ENCODE measurements at regions of chr13 and their contacts with region 1.

Region 1: GRCh38 chr13:20828539-20829364 is 55.0 kb upstream of the EEF1AKMT1 start:
- DNase-seq: peak; percentile 71
- H3K4me3 ChIP-seq: peak overlapping the region in 1 of 3 experiments; percentile 48
- H3K27ac ChIP-seq: peak overlapping the region; percentile 44
- H3K4me1 ChIP-seq: peaks cover 3% of the 10 kb centered on the region
- H3K27me3 ChIP-seq: no peaks in the 10 kb centered on the region
- CTCF ChIP-seq: peak; percentile 52 to 57
- POLR2A ChIP-seq: no peak

Region 2: GRCh38 chr13:20544201-20544923 is 284.4 kb before region 1 on chr13:
- CTCF ChIA-PET with region 1: no interaction called
- POLR2A ChIA-PET with region 1: no interaction called
- dilution Hi-C with region 1: no loop called
- intact Hi-C with region 1: no loop called
- DNase-seq: no peak
- H3K4me3 ChIP-seq: no peak overlapping the region
- H3K27ac ChIP-seq: no peak overlapping the region
- H3K4me1 ChIP-seq: no peaks in the 10 kb centered on the region
- H3K27me3 ChIP-seq: no peaks in the 10 kb centered on the region
- CTCF ChIP-seq: no peak
- POLR2A ChIP-seq: no peak

Region 3: DNA sequence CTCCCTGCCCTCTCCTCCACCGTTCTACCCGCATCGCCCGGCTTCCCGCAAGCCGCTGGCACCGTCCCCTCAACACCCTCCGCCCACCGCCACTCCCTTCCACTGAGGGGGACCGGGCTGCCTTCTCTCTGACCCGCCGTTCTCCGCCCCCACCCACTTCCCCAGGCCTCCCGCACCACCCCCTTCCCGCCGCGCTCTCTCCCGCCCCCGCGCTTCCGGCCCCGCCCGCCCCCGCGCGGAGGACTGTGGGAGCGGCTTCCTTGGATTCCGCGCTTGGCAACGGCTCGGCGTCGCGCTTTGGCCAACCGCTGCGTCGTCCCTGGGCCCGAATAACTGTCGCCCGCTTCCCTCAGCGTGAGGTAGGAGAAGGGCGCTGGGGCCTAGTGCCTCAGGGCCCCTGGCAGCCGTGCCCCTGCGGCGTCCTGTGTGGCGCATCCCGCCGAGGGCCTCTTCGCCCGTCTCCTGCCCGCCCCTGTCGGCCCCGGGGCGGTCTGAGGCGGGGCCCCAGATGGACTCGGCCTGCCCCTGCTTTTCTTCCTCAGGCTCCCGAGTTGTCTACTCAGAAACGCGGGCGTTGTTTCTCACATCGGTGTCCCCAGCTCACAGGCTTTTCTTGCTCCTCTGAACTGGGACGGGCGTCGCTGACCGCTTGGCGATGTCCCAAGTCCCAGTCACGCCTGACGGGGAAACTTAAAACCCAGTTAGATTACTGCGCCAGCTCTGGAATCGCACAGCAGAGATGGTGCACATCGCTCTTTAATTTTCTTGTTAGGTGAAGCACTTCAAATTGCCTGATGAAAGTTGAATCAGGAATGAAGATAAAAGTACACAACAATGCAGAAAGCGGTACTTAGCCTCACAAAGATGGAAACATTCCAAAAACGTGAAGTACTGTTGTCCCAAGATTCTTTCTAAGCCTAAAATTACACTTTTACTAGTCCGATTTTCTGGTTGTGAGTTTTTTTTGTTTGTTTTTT is 261.6 kb before region 1 on chr13 and contains the start of gene IFT88:
- CTCF ChIA-PET with region 1: interaction called, 4 read pairs
- POLR2A ChIA-PET with region 1: no interaction called
- dilution Hi-C with region 1: no loop called
- intact Hi-C with region 1: loop called (anchors 5 kb)
- DNase-seq: peak; percentile 90
- H3K4me3 ChIP-seq: peak within 1 kb of the TSS; percentile 22 to 89 (median 70)
- H3K27ac ChIP-seq: peak within 1 kb of the TSS; percentile 85
- H3K4me1 ChIP-seq: peaks cover 8% of the 10 kb centered on the region
- H3K27me3 ChIP-seq: no peaks in the 10 kb centered on the region
- CTCF ChIP-seq: no peak
- POLR2A ChIP-seq: peak; percentile 57
- total RNA-seq, gene IFT88: 9.1 and 13.7 TPM in 2 replicates

Region 4: GRCh38 chr13:20713751-20714150 is 115.0 kb before region 1 on chr13:
- CTCF ChIA-PET with region 1: interaction called, 92 read pairs
- POLR2A ChIA-PET with region 1: interaction called, 3 read pairs
- dilution Hi-C with region 1: no loop called
- intact Hi-C with region 1: loop called (anchors 1 kb)
- DNase-seq: peak; percentile 38
- H3K4me3 ChIP-seq: no peak overlapping the region
- H3K27ac ChIP-seq: peak overlapping the region; percentile 56
- H3K4me1 ChIP-seq: peaks cover 38% of the 10 kb centered on the region
- H3K27me3 ChIP-seq: no peaks in the 10 kb centered on the region
- CTCF ChIP-seq: no peak
- POLR2A ChIP-seq: no peak

Region 5: DNA sequence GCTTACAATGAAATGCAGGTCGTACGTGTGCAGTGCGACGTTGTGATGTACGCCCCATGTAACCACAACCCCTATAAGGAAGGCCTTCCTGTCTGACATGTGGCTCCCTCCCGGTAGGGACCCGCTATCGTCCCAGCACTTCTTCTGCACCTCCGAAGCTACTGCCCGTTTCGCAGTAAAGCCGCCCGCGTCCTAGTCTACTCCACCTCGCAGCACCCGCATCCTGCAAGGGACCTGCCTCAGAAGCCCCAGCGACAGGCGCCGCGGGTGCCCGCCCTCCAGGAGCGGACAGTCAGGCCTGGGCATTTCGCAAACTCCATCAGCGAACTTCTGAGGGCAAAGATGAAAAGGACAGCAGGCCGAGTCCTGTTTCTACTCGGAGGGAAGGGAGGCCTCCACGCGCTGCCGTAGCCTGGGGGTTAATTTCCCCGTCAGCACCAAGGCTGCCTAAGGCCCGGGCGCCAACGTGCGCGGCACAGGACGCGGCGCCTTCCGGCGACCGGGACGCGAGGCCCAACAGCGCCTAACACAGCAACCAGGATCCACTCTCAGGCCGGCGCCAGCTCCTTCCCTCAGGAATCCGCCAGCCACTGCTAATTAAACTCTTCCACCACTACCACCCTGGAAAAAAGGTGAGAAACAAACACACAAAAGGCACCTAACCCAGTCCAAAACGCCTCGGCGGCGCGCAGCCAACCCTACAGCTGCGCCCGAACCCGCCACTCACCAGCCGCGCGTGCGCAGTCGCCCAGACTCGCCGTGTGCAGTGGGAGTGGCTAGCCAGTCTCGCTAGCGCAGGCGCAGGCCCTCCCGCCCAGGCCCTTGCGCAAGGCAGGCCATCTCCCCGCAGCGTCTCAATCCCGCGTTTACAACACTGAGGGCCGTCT is 55.3 kb before region 1 on chr13 and contains the start of gene EEF1AKMT1:
- CTCF ChIA-PET with region 1: interaction called, 21 read pairs
- POLR2A ChIA-PET with region 1: no interaction called
- dilution Hi-C with region 1: no loop called
- intact Hi-C with region 1: loop called (anchors 5 kb)
- DNase-seq: peak; percentile 91
- H3K4me3 ChIP-seq: peak within 1 kb of the TSS; percentile 13 to 60 (median 35)
- H3K27ac ChIP-seq: peak within 1 kb of the TSS; percentile 88
- H3K4me1 ChIP-seq: peaks cover 18% of the 10 kb centered on the region
- H3K27me3 ChIP-seq: no peaks in the 10 kb centered on the region
- CTCF ChIP-seq: no peak
- POLR2A ChIP-seq: peak; percentile 56
- total RNA-seq, gene EEF1AKMT1: 8.7 and 11.1 TPM in 2 replicates

Region 6: GRCh38 chr13:20814224-20814910 is 14.4 kb before region 1 on chr13:
- CTCF ChIA-PET with region 1: interaction called, 96 read pairs
- POLR2A ChIA-PET with region 1: interaction called, 3 read pairs
- dilution Hi-C with region 1: no loop called
- intact Hi-C with region 1: loop called (anchors 1 kb)
- DNase-seq: peak; percentile 98
- H3K4me3 ChIP-seq: peak overlapping the region in 1 of 3 experiments; percentile 30
- H3K27ac ChIP-seq: peak overlapping the region; percentile 99
- H3K4me1 ChIP-seq: peaks cover 44% of the 10 kb centered on the region
- H3K27me3 ChIP-seq: no peaks in the 10 kb centered on the region
- CTCF ChIP-seq: no peak
- POLR2A ChIP-seq: no peak

Region 7: DNA sequence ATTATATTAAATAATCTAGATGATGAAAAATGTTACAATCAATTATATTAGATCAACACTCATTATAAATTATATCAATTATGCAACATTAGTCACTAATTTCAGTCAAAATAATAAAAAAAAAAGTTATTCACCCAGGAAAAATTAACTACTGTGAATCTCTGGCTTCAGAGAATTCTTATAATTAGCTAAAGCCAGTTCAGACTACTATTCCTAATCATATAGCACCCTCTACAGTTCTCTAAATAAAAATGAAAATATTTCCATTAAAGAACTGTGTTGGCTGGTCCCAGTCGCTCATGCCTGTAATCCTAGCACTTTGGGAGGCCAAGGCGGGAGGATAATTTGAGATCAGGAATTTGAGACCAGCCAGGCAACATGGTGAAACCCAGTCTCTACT is 40.8 kb after region 1 on chr13:
- CTCF ChIA-PET with region 1: interaction called, 15 read pairs
- POLR2A ChIA-PET with region 1: no interaction called
- dilution Hi-C with region 1: no loop called
- intact Hi-C with region 1: no loop called
- DNase-seq: peak; percentile 30
- H3K4me3 ChIP-seq: no peak overlapping the region
- H3K27ac ChIP-seq: no peak overlapping the region
- H3K4me1 ChIP-seq: peaks cover 16% of the 10 kb centered on the region
- H3K27me3 ChIP-seq: no peaks in the 10 kb centered on the region
- CTCF ChIP-seq: no peak
- POLR2A ChIP-seq: no peak

Region 8: DNA sequence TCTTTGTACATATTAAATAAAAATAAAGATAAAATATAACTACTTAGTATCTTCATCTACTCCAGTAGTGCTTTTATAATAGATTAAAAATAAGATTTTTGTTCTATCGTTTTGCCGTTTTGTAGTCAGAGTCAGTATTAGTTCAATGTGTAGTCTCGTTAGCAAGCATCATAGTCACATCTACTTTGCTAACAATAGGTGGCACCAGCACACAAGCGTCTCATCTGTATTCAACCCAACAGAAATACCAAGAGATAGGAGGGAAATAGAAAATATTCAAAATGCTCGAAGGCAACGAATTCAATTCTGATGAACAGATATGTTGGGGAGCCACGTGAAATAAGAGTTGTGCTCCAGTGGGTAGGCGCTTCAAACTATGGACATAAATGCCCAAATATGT is 796.6 kb after region 1 on chr13:
- CTCF ChIA-PET with region 1: no interaction called
- POLR2A ChIA-PET with region 1: no interaction called
- dilution Hi-C with region 1: no loop called
- intact Hi-C with region 1: no loop called
- DNase-seq: peak; percentile 11
- H3K4me3 ChIP-seq: no peak overlapping the region
- H3K27ac ChIP-seq: no peak overlapping the region
- H3K4me1 ChIP-seq: no peaks in the 10 kb centered on the region
- H3K27me3 ChIP-seq: peaks cover 0 to 4% of the 10 kb centered on the region in 2 experiments
- CTCF ChIP-seq: no peak
- POLR2A ChIP-seq: no peak

Measured in endothelial cell of umbilical vein (primary cell).